ENCODE measurements at regions of chr11 and their contacts with region 1.

Region 1: DNA sequence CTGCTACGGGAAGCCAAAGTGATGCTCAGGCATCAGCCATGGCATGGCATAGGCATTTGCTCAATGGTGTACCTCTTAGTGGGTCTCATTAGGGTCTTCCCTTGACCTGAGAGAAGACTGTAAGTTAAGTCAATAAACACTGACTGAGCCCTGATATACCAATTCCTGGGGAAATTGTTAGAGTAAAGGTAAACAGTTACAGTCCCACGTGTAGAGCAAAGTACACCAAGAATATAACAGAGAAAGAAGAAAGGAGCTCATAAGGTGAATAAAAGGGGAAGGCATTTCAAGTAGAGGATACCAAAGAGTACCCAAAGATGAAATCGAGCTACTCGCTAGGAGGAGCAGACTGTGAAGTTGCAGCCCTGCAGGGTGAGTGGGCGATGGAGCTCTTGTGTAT is 474.8 kb upstream of the TENM4 start:
- DNase-seq: no peak
- H3K4me3 ChIP-seq: no peak overlapping the region
- H3K27ac ChIP-seq: no peak overlapping the region
- H3K4me1 ChIP-seq: no peaks in the 10 kb centered on the region
- H3K27me3 ChIP-seq: no peaks in the 10 kb centered on the region
- CTCF ChIP-seq: no peak
- POLR2A ChIP-seq: no peak

Region 2: GRCh38 chr11:78465169-78465942 is 1450.3 kb before region 1 on chr11:
- intact Hi-C with region 1: no loop called
- DNase-seq: no peak
- H3K4me3 ChIP-seq: no peak overlapping the region
- H3K27ac ChIP-seq: no peak overlapping the region
- H3K4me1 ChIP-seq: no peaks in the 10 kb centered on the region
- H3K27me3 ChIP-seq: no peaks in the 10 kb centered on the region
- CTCF ChIP-seq: no peak
- POLR2A ChIP-seq: no peak

Region 3: DNA sequence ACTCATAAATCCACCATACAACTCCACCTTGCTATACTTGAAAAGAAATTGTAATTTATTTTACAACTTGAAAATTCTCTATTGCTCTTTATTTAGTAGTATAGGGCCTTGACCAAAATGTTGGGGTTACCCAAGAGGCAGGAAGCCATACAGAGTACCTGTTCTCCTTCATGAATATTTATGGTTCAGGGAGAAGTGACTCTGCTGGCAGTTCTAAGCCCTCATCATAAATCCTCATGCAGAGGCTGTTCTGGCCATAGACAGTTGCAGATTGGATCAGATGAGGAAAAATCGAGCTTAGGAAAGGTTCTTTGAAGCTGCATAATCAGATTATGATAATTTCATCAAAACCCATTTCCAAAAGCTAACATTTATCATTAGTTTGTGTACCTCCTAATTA is 25.4 kb before region 1 on chr11:
- intact Hi-C with region 1: loop called (anchors 2 kb)
- DNase-seq: no peak
- H3K4me3 ChIP-seq: no peak overlapping the region
- H3K27ac ChIP-seq: no peak overlapping the region
- H3K4me1 ChIP-seq: no peaks in the 10 kb centered on the region
- H3K27me3 ChIP-seq: no peaks in the 10 kb centered on the region
- CTCF ChIP-seq: no peak
- POLR2A ChIP-seq: no peak

Region 4: DNA sequence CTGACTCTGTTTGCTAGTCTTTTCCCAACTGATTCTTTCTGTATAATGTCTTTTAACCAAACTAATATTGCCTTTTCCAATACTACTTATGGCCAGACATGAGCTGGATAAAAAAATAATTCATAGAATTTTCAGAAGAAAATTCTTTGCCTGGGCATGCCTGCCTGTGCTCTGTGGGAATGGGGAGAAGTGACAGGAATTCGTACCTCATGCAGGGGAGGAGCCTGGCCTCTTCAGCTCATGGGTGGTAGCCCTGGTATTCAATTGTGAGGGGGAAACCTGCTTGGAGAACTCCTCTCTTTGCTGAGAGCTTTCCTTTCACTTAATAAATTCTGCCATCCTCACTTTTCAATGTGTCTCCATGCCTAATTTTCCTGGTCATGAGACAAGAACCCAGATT is 1889.2 kb after region 1 on chr11:
- intact Hi-C with region 1: no loop called
- DNase-seq: no peak
- H3K4me3 ChIP-seq: no peak overlapping the region
- H3K27ac ChIP-seq: no peak overlapping the region
- H3K4me1 ChIP-seq: no peaks in the 10 kb centered on the region
- H3K27me3 ChIP-seq: no peaks in the 10 kb centered on the region
- CTCF ChIP-seq: no peak
- POLR2A ChIP-seq: no peak

Measured in vagina (tissue), 2 donors.